ENCODE measurements at regions of chr9 and their contacts with region 1.

Region 1: DNA sequence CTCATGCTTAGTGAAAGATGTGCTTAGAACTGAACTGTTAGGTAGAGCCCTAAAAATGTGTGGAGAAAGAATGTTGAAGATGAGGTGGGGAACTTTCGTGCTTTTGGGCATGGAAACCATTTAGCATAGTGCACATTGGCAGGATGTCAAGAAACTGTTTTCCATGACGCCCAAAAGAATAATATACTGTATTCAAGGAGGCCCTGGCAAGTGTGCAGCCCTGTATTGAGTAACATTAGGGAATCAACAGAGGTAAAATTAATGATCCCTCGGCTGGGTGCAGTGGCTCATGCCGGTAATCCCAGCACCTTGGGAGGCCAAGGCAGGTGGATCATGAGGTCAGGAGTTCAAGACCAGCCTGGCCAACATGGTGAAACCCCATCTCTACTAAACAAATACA is 20.9 kb upstream of the PLIN2 start:
- DNase-seq: no peak
- ATAC-seq: no peak
- H3K4me3 ChIP-seq: no peak overlapping the region
- H3K27ac ChIP-seq: no peak overlapping the region
- H3K4me1 ChIP-seq: no peaks in the 10 kb centered on the region
- H3K27me3 ChIP-seq: no peaks in the 10 kb centered on the region
- CTCF ChIP-seq: no peak

Region 2: DNA sequence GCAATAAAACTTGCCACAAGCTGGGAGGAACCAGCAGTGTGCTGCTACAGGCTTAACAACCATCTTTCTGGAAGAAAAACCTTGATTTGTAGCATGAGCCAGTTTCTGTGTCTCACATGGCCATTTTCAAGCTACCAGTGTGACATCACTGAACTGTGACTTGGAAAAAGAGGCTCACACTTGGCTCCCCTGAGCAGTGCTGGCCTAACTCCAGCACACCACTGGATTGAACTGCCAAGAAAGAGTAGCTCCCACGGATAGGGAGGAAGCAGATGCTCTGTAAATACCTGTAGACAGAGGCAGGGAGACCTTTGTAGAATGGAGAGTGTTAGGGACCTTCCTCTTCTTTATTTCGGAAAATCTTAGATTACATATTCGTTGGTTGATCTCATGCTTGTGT is 1371.4 kb before region 1 on chr9:
- CTCF ChIA-PET with region 1: no interaction called
- POLR2A ChIA-PET with region 1: interaction called, 10 read pairs
- in situ Hi-C with region 1: no loop called
- intact Hi-C with region 1: no loop called
- DNase-seq: no peak
- ATAC-seq: no peak
- H3K4me3 ChIP-seq: no peak overlapping the region
- H3K27ac ChIP-seq: no peak overlapping the region
- H3K4me1 ChIP-seq: no peaks in the 10 kb centered on the region
- H3K27me3 ChIP-seq: no peaks in the 10 kb centered on the region
- CTCF ChIP-seq: no peak

Measured in Panc1 (cell line).